Activated CD4-positive, alpha-beta T cell treated with anti-CD3 and anti-CD28 coated beads for 36 hours (primary cell): ENCODE measurements at regions of chr3 and their contacts with region 1.

Region 1: DNA sequence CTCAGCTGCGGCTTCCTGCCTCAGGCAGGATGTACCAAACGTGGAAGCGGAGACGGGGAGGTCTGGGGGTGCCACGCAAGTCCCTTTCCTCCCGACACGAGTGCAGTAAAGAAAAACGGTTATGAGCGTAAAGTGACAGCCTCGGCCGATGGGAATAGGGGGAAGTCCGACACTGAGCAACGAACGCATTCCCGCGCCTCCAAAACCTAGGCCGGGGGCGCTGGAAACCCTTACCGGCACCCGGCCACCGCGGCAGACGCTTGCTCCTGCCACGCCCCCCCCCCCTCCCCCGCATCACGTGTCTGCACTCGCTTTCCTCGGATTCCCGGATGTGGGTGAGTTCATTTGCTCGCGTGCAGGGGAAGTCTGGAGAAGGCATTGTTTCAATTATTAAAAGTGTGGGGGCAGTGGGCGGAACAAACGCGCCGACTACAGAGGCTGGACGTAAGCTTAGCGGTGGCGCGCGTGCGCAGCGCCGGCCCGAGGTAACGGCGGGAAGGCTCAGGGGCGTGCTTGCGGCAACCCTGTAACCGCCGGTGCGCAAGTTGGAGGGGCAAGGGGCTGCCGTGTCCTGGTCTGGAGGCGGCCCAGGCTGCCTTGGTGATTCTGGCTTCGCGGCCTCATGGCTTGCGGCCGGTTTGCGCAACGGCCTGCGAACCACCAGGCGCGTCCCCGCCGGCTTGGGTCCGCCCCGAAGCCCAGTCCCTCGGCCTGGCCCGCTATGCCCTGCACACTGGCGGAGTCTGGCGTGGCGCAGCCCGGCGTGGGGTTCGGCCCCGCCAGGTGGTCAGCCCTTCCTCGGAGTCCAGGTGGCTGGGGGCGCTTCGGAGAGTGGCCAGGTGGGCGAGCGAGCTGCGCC is at the starts of genes ANAPC13 and CEP63:
- DNase-seq: peak; percentile 95
- ATAC-seq: peak; percentile 86
- H3K4me3 Mint-ChIP-seq: peak within 1 kb of the TSS; percentile 92
- H3K27ac Mint-ChIP-seq: peak within 1 kb of the TSS; percentile 98
- H3K4me1 Mint-ChIP-seq: peaks cover 47% of the 10 kb centered on the region
- H3K27me3 Mint-ChIP-seq: no peaks in the 10 kb centered on the region
- total RNA-seq, gene ANAPC13: 35.9 to 39.7 TPM
- total RNA-seq, gene CEP63: 21.3 to 25.9 TPM

Region 2: DNA sequence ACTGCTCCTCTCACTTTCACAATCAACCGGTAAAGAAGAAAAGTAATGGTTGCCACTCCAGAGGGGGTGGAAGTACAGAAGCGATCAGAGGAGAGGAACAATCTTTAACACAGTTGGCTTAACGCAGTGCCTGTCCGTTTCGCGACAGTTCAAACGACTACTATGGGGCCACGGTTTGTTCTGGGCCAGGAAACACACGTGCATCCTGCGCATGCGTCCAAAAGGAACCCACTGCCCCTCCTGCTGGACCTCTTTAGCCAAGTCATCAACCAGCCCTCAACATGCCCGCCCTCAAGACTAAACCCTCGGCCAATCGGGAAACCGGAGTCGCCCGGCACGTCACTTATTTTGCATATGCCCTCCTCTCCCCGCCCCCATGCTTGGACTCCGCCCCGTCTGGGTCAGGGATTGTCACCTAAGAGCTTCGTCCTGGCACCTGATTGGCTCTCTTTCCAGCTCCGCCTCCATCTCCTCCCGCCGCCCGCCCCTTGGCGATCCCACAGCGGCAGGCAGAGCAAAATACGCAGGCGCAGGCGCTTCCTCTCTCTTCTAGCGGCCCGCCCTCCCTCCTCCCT is 912.8 kb before region 1 on chr3:
- CTCF ChIA-PET with region 1: no interaction called
- POLR2A ChIA-PET with region 1: interaction called, 3 read pairs
- intact Hi-C with region 1: loop called in 1 of 2 experiments (anchors 2 kb)
- DNase-seq: peak; percentile 100
- ATAC-seq: peak; percentile 81
- H3K4me3 Mint-ChIP-seq: peak overlapping the region; percentile 87
- H3K27ac Mint-ChIP-seq: peak overlapping the region; percentile 100
- H3K4me1 Mint-ChIP-seq: peaks cover 47% of the 10 kb centered on the region
- H3K27me3 Mint-ChIP-seq: no peaks in the 10 kb centered on the region

Region 3: GRCh38 chr3:134197681-134198261 is 288.2 kb before region 1 on chr3:
- CTCF ChIA-PET with region 1: interaction called, 8 read pairs
- POLR2A ChIA-PET with region 1: no interaction called
- intact Hi-C with region 1: loop called in 1 of 2 experiments (anchors 5 kb)
- DNase-seq: no peak
- ATAC-seq: peak; percentile 93
- H3K4me3 Mint-ChIP-seq: no peak overlapping the region
- H3K27ac Mint-ChIP-seq: no peak overlapping the region
- H3K4me1 Mint-ChIP-seq: peaks cover 17% of the 10 kb centered on the region
- H3K27me3 Mint-ChIP-seq: no peaks in the 10 kb centered on the region

Region 4: DNA sequence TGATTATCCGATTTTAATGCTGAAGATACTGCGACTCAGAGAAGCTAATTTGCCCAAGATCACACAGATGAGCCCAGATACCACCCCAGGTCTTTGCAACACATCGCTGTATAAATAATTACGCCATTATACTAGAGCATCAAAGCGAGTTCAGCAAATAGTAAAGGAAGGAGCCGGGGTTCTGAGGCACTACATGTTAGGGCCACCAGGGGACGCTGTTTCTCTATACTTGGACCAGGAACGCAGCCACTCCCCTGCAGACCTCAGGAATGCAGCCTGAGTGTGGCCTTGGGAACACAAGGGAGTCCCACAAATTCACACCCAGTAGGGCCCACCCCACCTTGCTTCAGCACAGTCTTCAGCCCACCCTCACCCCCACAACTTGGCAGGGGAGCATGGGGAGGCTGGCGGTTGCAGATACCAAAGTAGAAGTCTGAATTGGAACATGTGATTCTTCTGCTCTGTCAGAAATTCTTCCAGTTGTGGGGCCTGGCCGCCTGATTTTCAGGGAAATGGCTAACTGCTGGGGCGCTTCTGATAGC is 177.5 kb before region 1 on chr3:
- CTCF ChIA-PET with region 1: interaction called, 11 read pairs
- POLR2A ChIA-PET with region 1: no interaction called
- intact Hi-C with region 1: no loop called
- DNase-seq: peak; percentile 86
- ATAC-seq: peak; percentile 89
- H3K4me3 Mint-ChIP-seq: no peak overlapping the region
- H3K27ac Mint-ChIP-seq: no peak overlapping the region
- H3K4me1 Mint-ChIP-seq: peaks cover 4% of the 10 kb centered on the region
- H3K27me3 Mint-ChIP-seq: peaks cover 32% of the 10 kb centered on the region

Region 5: GRCh38 chr3:136196401-136197158 is 1710.6 kb after region 1 on chr3:
- CTCF ChIA-PET with region 1: no interaction called
- POLR2A ChIA-PET with region 1: no interaction called
- intact Hi-C with region 1: loop called in 1 of 2 experiments (anchors 2 kb)
- DNase-seq: peak; percentile 100
- ATAC-seq: peak; percentile 82
- H3K4me3 Mint-ChIP-seq: peak overlapping the region; percentile 100
- H3K27ac Mint-ChIP-seq: peak overlapping the region; percentile 98
- H3K4me1 Mint-ChIP-seq: peaks cover 25% of the 10 kb centered on the region
- H3K27me3 Mint-ChIP-seq: no peaks in the 10 kb centered on the region